GM12878 (cell line): ENCODE measurements at regions of chr12 and their contacts with region 1.

Region 1: DNA sequence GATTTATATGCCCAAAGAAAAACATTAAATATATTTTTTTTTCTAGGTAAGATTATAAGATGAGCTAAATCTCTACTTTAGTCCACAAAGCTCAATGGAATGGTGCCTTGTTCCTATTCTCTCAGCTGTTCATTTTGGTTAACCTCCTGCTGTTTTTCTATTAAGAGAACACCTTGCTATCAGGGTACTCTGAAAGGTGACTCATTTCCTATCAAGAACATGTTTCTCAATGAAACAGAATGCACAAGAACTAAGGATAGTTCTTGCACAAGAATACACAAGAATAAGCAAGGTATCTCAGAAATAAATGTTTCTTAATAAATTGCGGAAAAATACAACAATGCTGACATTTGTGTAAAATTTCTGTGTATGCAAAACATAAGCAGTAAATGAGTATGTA is 14.1 kb downstream of the ABCD2 start:
- DNase-seq: no peak
- ATAC-seq: peak; percentile 41
- H3K4me3 ChIP-seq: no peak overlapping the region
- H3K27ac ChIP-seq: no peak overlapping the region
- H3K4me1 ChIP-seq: no peaks in the 10 kb centered on the region
- H3K27me3 ChIP-seq: no peaks in the 10 kb centered on the region
- CTCF ChIP-seq: no peak
- EP300 ChIP-seq: no peak
- POLR2A ChIP-seq: no peak
- RAD21 ChIP-seq: no peak

Region 2: DNA sequence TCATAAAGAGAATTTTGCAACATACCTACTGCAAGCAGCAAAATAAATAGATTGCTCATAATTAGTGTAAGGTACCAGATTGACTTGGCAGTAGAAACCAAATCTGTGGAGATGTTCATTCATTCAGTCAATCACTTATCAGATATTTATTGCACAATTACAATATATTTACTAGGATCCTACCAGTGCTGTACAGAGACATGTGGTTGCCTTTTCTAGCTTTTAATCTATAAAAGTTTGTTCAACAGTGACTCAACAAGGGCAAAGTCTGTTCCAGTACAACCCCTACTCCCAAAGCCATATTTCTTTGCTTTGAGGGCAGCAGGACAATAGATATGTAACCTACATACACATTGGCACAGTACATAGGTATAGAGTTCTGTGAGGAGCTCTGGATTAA is 13.2 kb before region 1 on chr12:
- CTCF ChIA-PET with region 1: interaction called, 7 read pairs
- POLR2A ChIA-PET with region 1: no interaction called
- RAD21 ChIA-PET with region 1: interaction called, 4 read pairs
- SMC1A ChIA-PET with region 1: interaction called, 20 read pairs
- in situ Hi-C with region 1: no loop called
- intact Hi-C with region 1: no loop called
- DNase-seq: no peak
- ATAC-seq: peak; percentile 24; the same call in 2 of the 3 replicates
- H3K4me3 ChIP-seq: no peak overlapping the region
- H3K27ac ChIP-seq: no peak overlapping the region
- H3K4me1 ChIP-seq: no peaks in the 10 kb centered on the region
- H3K27me3 ChIP-seq: no peaks in the 10 kb centered on the region
- CTCF ChIP-seq: no peak
- EP300 ChIP-seq: no peak
- POLR2A ChIP-seq: no peak
- RAD21 ChIP-seq: no peak